ENCODE measurements at regions of chr5 and their contacts with region 1.

Region 1: GRCh38 chr5:95664204-95664786 is 17.7 kb downstream of the RFESD start:
- DNase-seq: peak; percentile 22 to 39
- H3K4me3 ChIP-seq: no peak overlapping the region
- H3K27ac ChIP-seq: peak overlapping the region in 1 of 3 donors; percentile 57
- H3K4me1 ChIP-seq: peaks cover 0 to 5% of the 10 kb centered on the region in 2 donors
- H3K27me3 ChIP-seq: no peaks in the 10 kb centered on the region
- CTCF ChIP-seq: peak; percentile 43 to 89 (median 76)
- POLR2A ChIP-seq: no peak

Region 2: GRCh38 chr5:95730730-95731570 is 66.7 kb after region 1 on chr5 and contains the start of gene RHOBTB3:
- intact Hi-C with region 1: loop called (anchors 10 kb)
- DNase-seq: peak; percentile 88 to 91
- H3K4me3 ChIP-seq: peak within 1 kb of the TSS; percentile 75 to 88 (median 79)
- H3K27ac ChIP-seq: peak within 1 kb of the TSS; percentile 82 to 94 (median 92)
- H3K4me1 ChIP-seq: peaks cover 35% of the 10 kb centered on the region in 2 donors
- H3K27me3 ChIP-seq: no peaks in the 10 kb centered on the region
- CTCF ChIP-seq: peak in 1 of 6 experiments; percentile 4
- POLR2A ChIP-seq: peak in 1 of 2 donors; percentile 90
- total RNA-seq, gene RHOBTB3: 58.7 to 85.7 (median 68.0) TPM

Region 3: GRCh38 chr5:95846554-95847260 is 182.4 kb after region 1 on chr5:
- intact Hi-C with region 1: loop called (anchors 5 kb)
- DNase-seq: peak; percentile 61 to 71
- H3K4me3 ChIP-seq: no peak overlapping the region
- H3K27ac ChIP-seq: no peak overlapping the region
- H3K4me1 ChIP-seq: peaks cover 8 to 24% of the 10 kb centered on the region in 2 donors
- H3K27me3 ChIP-seq: no peaks in the 10 kb centered on the region
- CTCF ChIP-seq: peak; percentile 78 to 96 (median 92)
- POLR2A ChIP-seq: no peak

Measured in thyroid gland (tissue), 4 donors.